SK-N-SH (cell line): ENCODE measurements at regions of chr12 and their contacts with region 1.

Region 1: DNA sequence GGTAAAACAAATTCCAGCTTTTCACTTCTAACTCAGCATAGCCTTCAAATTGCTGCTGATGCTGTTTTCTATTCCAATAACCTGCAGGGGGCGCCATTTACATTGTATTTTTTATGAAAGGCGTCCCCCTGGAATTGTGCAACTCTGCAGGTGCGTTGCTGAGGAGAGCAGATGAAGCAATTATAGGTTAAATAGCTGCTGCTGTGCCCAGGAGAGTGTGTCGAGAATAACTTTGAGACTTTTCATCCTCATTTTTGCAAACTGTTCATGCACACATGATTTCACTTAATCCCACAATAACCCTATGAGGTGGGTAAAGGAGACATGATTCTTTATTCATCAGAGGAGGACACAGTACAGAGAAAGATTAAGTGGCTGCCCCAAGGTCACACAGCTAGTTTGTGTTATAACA is 75.7 kb downstream of the MYRFL start:
- DNase-seq: peak; percentile 29
- H3K4me3 ChIP-seq: no peak overlapping the region; a peak in 1 of 4 replicates
- H3K27ac ChIP-seq: no peak overlapping the region
- H3K4me1 ChIP-seq: peaks cover 11 to 15% of the 10 kb centered on the region in 2 experiments; a peak in 2 of 4 replicates
- H3K27me3 ChIP-seq: no peaks in the 10 kb centered on the region
- CTCF ChIP-seq: peak; percentile 94
- EP300 ChIP-seq: no peak
- RAD21 ChIP-seq: peak; percentile 91

Region 2: GRCh38 chr12:69555461-69555860 is 345.3 kb before region 1 on chr12:
- CTCF ChIA-PET with region 1: no interaction called
- POLR2A ChIA-PET with region 1: no interaction called
- DNase-seq: no peak
- H3K4me3 ChIP-seq: no peak overlapping the region
- H3K27ac ChIP-seq: peak overlapping the region in 1 of 2 experiments; percentile 70; a peak in 2 of 4 replicates
- H3K4me1 ChIP-seq: peaks cover 0 to 7% of the 10 kb centered on the region in 2 experiments; a peak in 2 of 4 replicates
- H3K27me3 ChIP-seq: no peaks in the 10 kb centered on the region
- CTCF ChIP-seq: no peak
- EP300 ChIP-seq: peak in 1 of 2 experiments; percentile 32; a peak in 1 of 4 replicates
- RAD21 ChIP-seq: no peak

Region 3: GRCh38 chr12:69879041-69879960 is 21.4 kb before region 1 on chr12:
- CTCF ChIA-PET with region 1: interaction called, 36 read pairs
- POLR2A ChIA-PET with region 1: no interaction called
- DNase-seq: peak; percentile 76
- H3K4me3 ChIP-seq: peak overlapping the region; percentile 35 to 37; a peak in 2 of 4 replicates
- H3K27ac ChIP-seq: no peak overlapping the region
- H3K4me1 ChIP-seq: peaks cover 0 to 5% of the 10 kb centered on the region in 2 experiments; a peak in 1 of 4 replicates
- H3K27me3 ChIP-seq: no peaks in the 10 kb centered on the region
- CTCF ChIP-seq: peak; percentile 94
- EP300 ChIP-seq: no peak
- RAD21 ChIP-seq: peak; percentile 98

Region 4: DNA sequence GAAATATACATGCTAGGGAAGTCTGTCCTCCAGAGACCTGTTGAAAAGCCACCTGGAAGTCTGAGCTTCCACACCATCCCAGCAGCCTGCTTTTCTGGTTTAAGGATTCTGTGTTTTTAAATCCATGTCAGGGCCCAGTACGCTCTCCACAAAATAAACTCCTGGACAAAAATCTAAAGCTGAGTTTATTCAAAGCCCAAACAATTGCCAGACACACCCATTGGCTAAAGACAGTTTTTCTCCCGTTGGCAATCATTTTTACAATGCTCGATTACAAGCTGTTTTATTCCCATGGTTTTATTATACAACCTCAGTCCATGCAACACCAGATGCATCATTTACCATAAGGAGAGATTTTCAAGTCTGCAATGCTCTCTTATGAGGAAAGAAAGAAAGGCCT is 18.8 kb after region 1 on chr12:
- CTCF ChIA-PET with region 1: interaction called, 16 read pairs
- POLR2A ChIA-PET with region 1: no interaction called
- DNase-seq: no peak
- H3K4me3 ChIP-seq: no peak overlapping the region
- H3K27ac ChIP-seq: no peak overlapping the region
- H3K4me1 ChIP-seq: no peaks in the 10 kb centered on the region; a peak in 1 of 4 replicates
- H3K27me3 ChIP-seq: no peaks in the 10 kb centered on the region
- CTCF ChIP-seq: no peak
- EP300 ChIP-seq: no peak
- RAD21 ChIP-seq: no peak

Region 5: DNA sequence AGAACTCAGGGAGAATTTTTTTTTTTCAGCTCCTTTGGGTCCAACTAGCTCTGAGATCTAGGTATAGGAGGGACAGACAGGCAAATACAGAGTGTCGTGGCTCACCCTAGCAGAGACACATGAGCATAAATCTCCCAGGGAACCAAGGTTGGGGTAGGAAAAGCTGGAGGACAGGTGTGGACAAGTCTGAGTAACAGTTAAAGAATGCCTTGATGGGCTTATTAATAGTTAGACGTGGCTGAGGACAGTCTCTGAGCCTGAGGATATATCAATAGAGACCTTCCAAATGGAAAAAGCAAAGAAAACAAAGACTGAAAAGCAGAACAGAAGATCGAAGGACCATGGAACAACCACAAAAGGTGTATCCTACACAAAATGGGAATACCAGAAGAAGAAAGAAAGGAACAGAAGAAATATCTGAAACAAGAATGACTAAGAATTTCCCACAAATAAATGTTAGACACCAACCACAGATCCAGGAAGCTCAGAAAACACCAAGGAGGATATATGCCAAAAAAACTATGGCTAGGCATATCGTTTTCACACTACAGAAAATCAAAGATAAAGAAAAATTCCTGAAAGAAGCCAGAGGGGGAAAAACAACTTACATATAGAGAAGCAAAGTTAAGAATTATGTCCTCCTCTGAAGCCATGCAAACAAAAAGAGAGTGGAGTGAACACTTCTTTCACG is 655.6 kb after region 1 on chr12:
- CTCF ChIA-PET with region 1: interaction called, 10 read pairs
- POLR2A ChIA-PET with region 1: no interaction called
- DNase-seq: no peak
- H3K4me3 ChIP-seq: no peak overlapping the region
- H3K27ac ChIP-seq: no peak overlapping the region
- H3K4me1 ChIP-seq: peaks cover 0 to 3% of the 10 kb centered on the region in 2 experiments; a peak in 2 of 4 replicates
- H3K27me3 ChIP-seq: no peaks in the 10 kb centered on the region
- CTCF ChIP-seq: no peak
- EP300 ChIP-seq: no peak
- RAD21 ChIP-seq: no peak

Region 6: DNA sequence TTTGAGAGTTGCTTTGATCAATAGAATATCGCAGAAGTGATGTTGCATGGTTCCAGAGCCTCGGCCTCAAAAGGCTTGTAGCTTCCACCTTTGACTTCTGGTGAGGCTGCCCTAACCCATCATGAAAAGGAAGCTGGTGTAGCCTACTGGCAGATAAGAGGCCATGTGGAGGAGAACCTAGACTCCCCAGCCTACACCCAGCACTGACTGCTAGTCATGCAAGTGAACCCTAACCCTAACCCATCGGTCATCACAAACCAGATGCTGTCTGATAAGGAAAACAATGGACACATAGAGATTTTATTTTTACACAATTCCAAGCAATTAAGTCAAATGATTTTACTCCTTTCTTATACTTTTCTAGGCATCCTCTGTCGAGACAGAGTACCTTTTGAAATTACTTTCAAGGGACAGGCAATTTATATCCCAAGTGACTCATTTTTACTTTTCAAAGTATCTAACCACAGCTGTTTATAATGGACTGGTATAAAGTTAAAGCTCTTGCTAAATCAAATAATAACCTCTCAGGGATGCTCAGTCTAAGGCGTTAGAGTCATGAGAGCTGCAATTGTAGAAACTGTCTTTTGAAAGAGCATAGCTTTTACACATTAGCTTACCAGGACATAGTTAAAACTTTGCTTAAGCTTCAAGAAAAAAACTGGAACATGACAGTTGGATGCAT is 718.9 kb after region 1 on chr12:
- CTCF ChIA-PET with region 1: interaction called, 10 read pairs
- POLR2A ChIA-PET with region 1: no interaction called
- DNase-seq: no peak
- H3K4me3 ChIP-seq: no peak overlapping the region
- H3K27ac ChIP-seq: no peak overlapping the region
- H3K4me1 ChIP-seq: no peaks in the 10 kb centered on the region
- H3K27me3 ChIP-seq: no peaks in the 10 kb centered on the region
- CTCF ChIP-seq: no peak
- EP300 ChIP-seq: no peak
- RAD21 ChIP-seq: no peak